BJ (cell line): ENCODE measurements at regions of chr22 and their contacts with region 1.

Region 1: GRCh38 chr22:38802671-38803121 is 8.8 kb upstream of the DNAL4 start:
- DNase-seq: peak; percentile 93
- H3K4me3 ChIP-seq: no peak overlapping the region
- H3K27me3 ChIP-seq: no peaks in the 10 kb centered on the region
- CTCF ChIP-seq: no peak

Region 2: DNA sequence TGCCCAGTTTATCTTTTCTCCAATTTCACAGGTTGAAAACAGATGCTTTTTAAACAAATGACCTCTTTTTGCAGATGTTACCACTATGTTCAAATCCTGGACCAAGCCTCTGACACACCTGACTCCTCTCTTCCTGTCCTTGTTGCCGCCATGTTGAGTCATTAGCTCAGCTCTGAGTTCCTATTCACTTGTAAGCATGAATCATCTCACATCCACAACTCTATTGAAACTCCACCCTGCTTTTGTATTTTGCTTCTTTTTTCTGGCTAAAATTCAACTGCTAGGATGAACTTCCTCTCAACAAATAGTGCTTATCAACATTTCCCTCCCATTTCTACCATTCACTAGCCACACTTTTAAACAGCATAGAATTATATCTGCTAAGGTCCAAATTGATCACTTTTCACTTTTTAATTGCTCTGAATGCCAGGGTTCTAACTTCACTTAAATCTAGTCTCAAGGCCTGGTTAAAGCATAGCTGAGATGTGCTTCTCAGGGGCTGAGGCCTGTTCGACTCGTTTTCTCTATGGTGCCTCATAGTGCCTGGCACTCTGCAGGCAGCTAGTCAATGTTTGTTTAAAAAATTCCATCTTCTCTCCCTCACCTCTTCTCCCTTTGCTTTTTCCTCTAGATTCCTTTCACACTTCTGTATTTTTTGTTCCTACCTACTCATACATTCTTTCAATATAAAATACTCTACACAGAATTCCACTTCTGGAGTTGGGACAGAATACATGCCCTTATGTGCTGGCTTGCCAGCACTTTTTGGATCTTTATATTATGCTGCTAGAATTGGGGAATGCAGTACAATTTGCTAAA is 105.9 kb before region 1 on chr22:
- CTCF ChIA-PET with region 1: no interaction called
- POLR2A ChIA-PET with region 1: no interaction called
- DNase-seq: peak; percentile 55
- H3K4me3 ChIP-seq: no peak overlapping the region
- H3K27me3 ChIP-seq: no peaks in the 10 kb centered on the region
- CTCF ChIP-seq: no peak

Region 3: GRCh38 chr22:38781028-38781427 is 21.7 kb before region 1 on chr22:
- CTCF ChIA-PET with region 1: no interaction called
- POLR2A ChIA-PET with region 1: no interaction called
- DNase-seq: no peak
- H3K4me3 ChIP-seq: no peak overlapping the region
- H3K27me3 ChIP-seq: no peaks in the 10 kb centered on the region
- CTCF ChIP-seq: no peak

Region 4: GRCh38 chr22:38881464-38881871 is 78.8 kb after region 1 on chr22:
- CTCF ChIA-PET with region 1: no interaction called
- POLR2A ChIA-PET with region 1: interaction called, 11 read pairs
- DNase-seq: peak; percentile 43
- H3K4me3 ChIP-seq: no peak overlapping the region
- H3K27me3 ChIP-seq: peaks cover 4% of the 10 kb centered on the region; the same call in 1 of the 2 replicates
- CTCF ChIP-seq: peak; percentile 34